ENCODE measurements at regions of chr2 and their contacts with region 1.

Region 1: GRCh38 chr2:39216346-39217191 is 27.2 kb downstream of the CDKL4 start:
- DNase-seq: peak; percentile 18 to 92 (median 81)
- ATAC-seq: peak; percentile 94
- H3K4me3 ChIP-seq: peak overlapping the region; percentile 20
- H3K4me3 Mint-ChIP-seq: peak overlapping the region; percentile 18 to 84 (median 60)
- H3K27ac ChIP-seq: peak overlapping the region; percentile 1
- H3K27ac Mint-ChIP-seq: peak overlapping the region; percentile 32 to 97 (median 75)
- H3K4me1 ChIP-seq: peaks cover 29 to 38% of the 10 kb centered on the region in 2 donors
- H3K4me1 Mint-ChIP-seq: peaks cover 26 to 72% (median 38%) of the 10 kb centered on the region in 7 donors
- H3K27me3 ChIP-seq: no peaks in the 10 kb centered on the region
- H3K27me3 Mint-ChIP-seq: peaks cover 0 to 2% (median 0%) of the 10 kb centered on the region in 5 donors

Region 2: GRCh38 chr2:38875576-38876367 is 340.8 kb before region 1 on chr2 and contains the starts of genes DHX57 and MORN2:
- CTCF ChIA-PET with region 1: no interaction called
- POLR2A ChIA-PET with region 1: no interaction called
- intact Hi-C with region 1: loop called in 1 of 2 experiments (anchors 5 kb)
- DNase-seq: peak; percentile 64 to 83 (median 79)
- ATAC-seq: peak; percentile 98
- H3K4me3 ChIP-seq: peak within 1 kb of the TSS; percentile 91
- H3K4me3 Mint-ChIP-seq: peak within 1 kb of the TSS; percentile 94 to 100 (median 96)
- H3K27ac ChIP-seq: peak within 1 kb of the TSS; percentile 69
- H3K27ac Mint-ChIP-seq: peak within 1 kb of the TSS; percentile 82 to 99 (median 95)
- H3K4me1 ChIP-seq: peaks cover 11 to 14% of the 10 kb centered on the region in 2 donors
- H3K4me1 Mint-ChIP-seq: peaks cover 13 to 48% (median 32%) of the 10 kb centered on the region in 7 donors
- H3K27me3 ChIP-seq: no peaks in the 10 kb centered on the region
- H3K27me3 Mint-ChIP-seq: no peaks in the 10 kb centered on the region
- total RNA-seq, gene DHX57: 12.9 to 19.8 (median 18.9) TPM
- total RNA-seq, gene MORN2: 1.5 to 2.7 (median 2.1) TPM

Region 3: GRCh38 chr2:39141331-39142271 is 75.0 kb before region 1 on chr2:
- CTCF ChIA-PET with region 1: no interaction called
- POLR2A ChIA-PET with region 1: interaction called, 5 read pairs
- intact Hi-C with region 1: loop called in 1 of 2 experiments (anchors 1 kb)
- DNase-seq: no peak
- ATAC-seq: no peak
- H3K4me3 ChIP-seq: no peak overlapping the region
- H3K4me3 Mint-ChIP-seq: peak overlapping the region in 1 of 10 donors; percentile 69
- H3K27ac ChIP-seq: no peak overlapping the region
- H3K27ac Mint-ChIP-seq: peak overlapping the region in 1 of 9 donors; percentile 86
- H3K4me1 ChIP-seq: peaks cover 7 to 9% of the 10 kb centered on the region in 2 donors
- H3K4me1 Mint-ChIP-seq: peaks cover 0 to 65% (median 16%) of the 10 kb centered on the region in 7 donors
- H3K27me3 ChIP-seq: no peaks in the 10 kb centered on the region
- H3K27me3 Mint-ChIP-seq: no peaks in the 10 kb centered on the region

Region 4: DNA sequence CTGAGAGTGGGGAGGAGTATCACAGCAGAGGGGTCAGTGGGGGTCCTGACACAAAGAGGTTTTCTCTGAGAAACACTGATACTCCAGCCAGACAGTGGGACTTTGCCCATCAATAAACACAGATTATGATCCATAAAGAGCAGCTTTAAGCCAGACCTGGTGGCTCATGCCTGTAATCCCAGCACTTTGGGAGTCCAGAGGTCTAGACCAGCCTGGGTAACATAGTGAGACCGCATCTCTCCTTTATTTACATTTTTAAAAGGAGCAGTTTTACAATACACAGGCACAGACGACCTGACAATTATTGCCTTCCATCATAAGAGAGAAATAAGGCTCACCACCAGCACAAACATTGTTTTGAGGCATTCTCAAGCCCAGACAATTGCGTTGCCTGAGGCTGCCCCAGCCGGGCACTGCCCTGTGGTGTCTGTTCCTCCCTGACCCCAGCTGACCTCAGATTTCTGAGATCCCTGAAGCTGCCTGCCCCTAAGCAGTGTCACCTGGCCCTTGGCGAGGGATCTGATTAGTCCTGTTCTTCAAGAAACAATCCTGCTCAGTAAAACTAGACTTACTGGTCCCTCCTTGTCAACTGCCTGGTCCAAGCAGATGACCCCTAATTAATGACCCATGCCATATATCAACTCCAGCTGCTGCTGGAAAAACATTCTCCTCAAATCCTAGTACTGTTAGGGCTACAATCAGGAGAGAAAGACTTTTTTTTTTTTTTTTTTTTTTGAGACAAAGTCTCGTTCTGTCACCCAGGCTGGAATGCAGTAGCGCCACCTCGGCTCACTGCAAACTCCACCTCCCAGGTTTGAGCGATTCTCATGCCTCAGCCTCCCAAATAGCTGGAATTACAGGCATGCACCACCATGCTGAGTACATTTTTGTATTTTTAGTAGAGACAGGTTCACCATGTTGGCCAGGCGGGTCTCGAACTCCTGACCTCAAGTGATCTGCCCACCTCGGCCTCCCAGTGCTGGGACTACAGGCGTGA is 36.3 kb before region 1 on chr2:
- CTCF ChIA-PET with region 1: no interaction called
- POLR2A ChIA-PET with region 1: no interaction called
- intact Hi-C with region 1: loop called in 1 of 2 experiments (anchors 5 kb)
- DNase-seq: no peak
- ATAC-seq: no peak
- H3K4me3 ChIP-seq: no peak overlapping the region
- H3K4me3 Mint-ChIP-seq: no peak overlapping the region
- H3K27ac ChIP-seq: no peak overlapping the region
- H3K27ac Mint-ChIP-seq: no peak overlapping the region
- H3K4me1 ChIP-seq: no peaks in the 10 kb centered on the region
- H3K4me1 Mint-ChIP-seq: peaks cover 0 to 11% (median 0%) of the 10 kb centered on the region in 7 donors
- H3K27me3 ChIP-seq: no peaks in the 10 kb centered on the region
- H3K27me3 Mint-ChIP-seq: peaks cover 0 to 8% (median 0%) of the 10 kb centered on the region in 5 donors

Region 5: GRCh38 chr2:39202639-39203369 is 13.8 kb before region 1 on chr2:
- CTCF ChIA-PET with region 1: interaction called, 4 read pairs
- POLR2A ChIA-PET with region 1: no interaction called
- intact Hi-C with region 1: loop called in 1 of 2 experiments (anchors 1 kb)
- DNase-seq: no peak
- ATAC-seq: no peak
- H3K4me3 ChIP-seq: no peak overlapping the region
- H3K4me3 Mint-ChIP-seq: peak overlapping the region in 1 of 10 donors; percentile 23
- H3K27ac ChIP-seq: no peak overlapping the region
- H3K27ac Mint-ChIP-seq: peak overlapping the region in 1 of 9 donors; percentile 84
- H3K4me1 ChIP-seq: no peaks in the 10 kb centered on the region
- H3K4me1 Mint-ChIP-seq: peaks cover 0 to 27% (median 9%) of the 10 kb centered on the region in 7 donors
- H3K27me3 ChIP-seq: no peaks in the 10 kb centered on the region
- H3K27me3 Mint-ChIP-seq: no peaks in the 10 kb centered on the region